Activated CD8-positive, alpha-beta memory T cell treated with anti-CD3 and anti-CD28 coated beads, Interleukin-2, amount 10 ng/mL, durations not matched to agents 7 days and 5 days (primary cell): ENCODE measurements at regions of chr21 and their contacts with region 1.

Region 1: GRCh38 chr21:23853796-23854379 is 1753.4 kb downstream of the MRPL39 start:
- DNase-seq: no peak
- ATAC-seq: peak; percentile 72
- H3K4me3 Mint-ChIP-seq: no peak overlapping the region
- H3K27ac Mint-ChIP-seq: no peak overlapping the region
- H3K4me1 Mint-ChIP-seq: peaks cover 6% of the 10 kb centered on the region
- H3K27me3 Mint-ChIP-seq: peaks cover 15% of the 10 kb centered on the region

Region 2: GRCh38 chr21:23968722-23969647 is 115.1 kb after region 1 on chr21:
- CTCF ChIA-PET with region 1: interaction called, 29 read pairs
- DNase-seq: peak; percentile 90
- ATAC-seq: peak; percentile 93
- H3K4me3 Mint-ChIP-seq: peak overlapping the region; percentile 41
- H3K27ac Mint-ChIP-seq: peak overlapping the region; percentile 74
- H3K4me1 Mint-ChIP-seq: peaks cover 22% of the 10 kb centered on the region
- H3K27me3 Mint-ChIP-seq: no peaks in the 10 kb centered on the region